Natural killer cell (primary cell): ENCODE measurements at regions of chr1 and their contacts with region 1.

Region 1: DNA sequence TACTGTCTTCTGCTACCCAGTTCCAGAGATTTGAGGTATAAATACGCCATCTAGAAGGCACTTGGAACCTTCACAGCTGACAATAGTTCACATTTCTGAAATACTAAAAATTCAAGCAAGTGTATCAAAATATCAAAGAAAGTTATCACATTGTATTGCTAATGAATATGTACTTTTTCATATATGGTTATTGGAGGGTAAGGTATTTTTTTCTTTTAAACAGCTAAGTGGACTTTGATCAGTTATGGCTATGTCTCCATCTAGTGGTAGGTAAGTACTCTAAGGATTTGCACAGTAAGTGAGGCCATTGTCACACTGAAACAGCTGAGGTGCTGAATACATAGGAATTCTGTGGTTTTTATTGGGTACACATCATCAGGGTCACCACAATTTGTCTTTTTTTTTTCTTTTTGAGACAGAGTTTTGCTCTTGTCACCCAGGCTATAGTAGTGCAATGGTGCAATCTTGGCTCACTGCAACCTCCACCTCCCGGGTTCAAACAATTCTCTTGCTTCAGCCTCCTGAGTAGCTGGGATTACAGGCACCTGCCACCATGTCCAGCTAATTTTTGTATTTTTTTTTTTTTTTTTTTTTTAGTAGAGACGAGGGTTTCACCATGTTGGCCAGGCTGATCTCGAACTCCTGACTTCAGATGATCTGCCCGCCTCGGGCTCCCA is 49.1 kb upstream of the CR2 start:
- DNase-seq: peak in 1 of 2 donors; percentile 78
- ATAC-seq: peak; percentile 81 to 89 (median 88)
- H3K4me3 ChIP-seq: no peak overlapping the region
- H3K4me3 Mint-ChIP-seq: no peak overlapping the region
- H3K27ac ChIP-seq: no peak overlapping the region
- H3K27ac Mint-ChIP-seq: no peak overlapping the region
- H3K4me1 ChIP-seq: no peaks in the 10 kb centered on the region
- H3K4me1 Mint-ChIP-seq: no peaks in the 10 kb centered on the region
- H3K27me3 ChIP-seq: no peaks in the 10 kb centered on the region
- H3K27me3 Mint-ChIP-seq: peaks cover 10 to 14% of the 10 kb centered on the region in 2 donors
- CTCF ChIP-seq: peak; percentile 93

Region 2: GRCh38 chr1:207084701-207085180 is 320.2 kb before region 1 on chr1:
- intact Hi-C with region 1: loop called (anchors 1 kb)
- DNase-seq: peak in 1 of 2 donors; percentile 83
- ATAC-seq: peak; percentile 54 to 81 (median 70)
- H3K4me3 ChIP-seq: no peak overlapping the region
- H3K4me3 Mint-ChIP-seq: no peak overlapping the region
- H3K27ac ChIP-seq: no peak overlapping the region
- H3K27ac Mint-ChIP-seq: no peak overlapping the region
- H3K4me1 ChIP-seq: no peaks in the 10 kb centered on the region
- H3K4me1 Mint-ChIP-seq: peaks cover 7 to 13% of the 10 kb centered on the region in 2 donors
- H3K27me3 ChIP-seq: peaks cover 7% of the 10 kb centered on the region
- H3K27me3 Mint-ChIP-seq: peaks cover 18 to 42% of the 10 kb centered on the region in 2 donors
- CTCF ChIP-seq: peak; percentile 62

Region 3: GRCh38 chr1:207181838-207182237 is 223.1 kb before region 1 on chr1:
- intact Hi-C with region 1: loop called (anchors 2 kb)
- DNase-seq: peak in 1 of 2 donors; percentile 45
- ATAC-seq: no peak
- H3K4me3 ChIP-seq: no peak overlapping the region
- H3K4me3 Mint-ChIP-seq: no peak overlapping the region
- H3K27ac ChIP-seq: no peak overlapping the region
- H3K27ac Mint-ChIP-seq: no peak overlapping the region
- H3K4me1 ChIP-seq: no peaks in the 10 kb centered on the region
- H3K4me1 Mint-ChIP-seq: no peaks in the 10 kb centered on the region
- H3K27me3 ChIP-seq: no peaks in the 10 kb centered on the region
- H3K27me3 Mint-ChIP-seq: peaks cover 23 to 75% of the 10 kb centered on the region in 2 donors
- CTCF ChIP-seq: peak; percentile 16